Calu3 (cell line): ENCODE measurements at regions of chrX and their contacts with region 1.

Region 1: GRCh38 chrX:121479406-121479805 is 432.0 kb downstream of the GLUD2 start:
- DNase-seq: no peak
- H3K4me3 Mint-ChIP-seq: no peak overlapping the region
- H3K27ac Mint-ChIP-seq: peak overlapping the region; percentile 16
- H3K4me1 Mint-ChIP-seq: no peaks in the 10 kb centered on the region
- H3K27me3 Mint-ChIP-seq: no peaks in the 10 kb centered on the region
- CTCF ChIP-seq: no peak

Region 2: GRCh38 chrX:121746105-121746504 is 266.7 kb after region 1 on chrX:
- CTCF ChIA-PET with region 1: no interaction called
- intact Hi-C with region 1: loop called (anchors 2 kb)
- DNase-seq: no peak
- H3K4me3 Mint-ChIP-seq: no peak overlapping the region
- H3K27ac Mint-ChIP-seq: no peak overlapping the region
- H3K4me1 Mint-ChIP-seq: no peaks in the 10 kb centered on the region
- H3K27me3 Mint-ChIP-seq: no peaks in the 10 kb centered on the region
- CTCF ChIP-seq: no peak